ENCODE measurements at regions of chrX and their contacts with region 1.

Region 1: GRCh38 chrX:133444951-133445831 is 29.9 kb upstream of the GPC4 start:
- DNase-seq: peak; percentile 15 to 36
- H3K4me3 ChIP-seq: peak overlapping the region; percentile 21; the same call in 1 of the 2 replicates
- H3K4me3 Mint-ChIP-seq: peak overlapping the region; percentile 84
- H3K27ac Mint-ChIP-seq: peak overlapping the region; percentile 83
- H3K4me1 ChIP-seq: no peaks in the 10 kb centered on the region
- H3K4me1 Mint-ChIP-seq: no peaks in the 10 kb centered on the region
- H3K27me3 ChIP-seq: no peaks in the 10 kb centered on the region
- H3K27me3 Mint-ChIP-seq: no peaks in the 10 kb centered on the region
- CTCF ChIP-seq: no peak

Region 2: GRCh38 chrX:133265331-133265730 is 179.9 kb before region 1 on chrX:
- CTCF ChIA-PET with region 1: no interaction called
- POLR2A ChIA-PET with region 1: no interaction called
- intact Hi-C with region 1: no loop called
- DNase-seq: peak; percentile 34 to 62
- H3K4me3 ChIP-seq: no peak overlapping the region
- H3K4me3 Mint-ChIP-seq: no peak overlapping the region
- H3K27ac Mint-ChIP-seq: no peak overlapping the region
- H3K4me1 ChIP-seq: peaks cover 11% of the 10 kb centered on the region; the same call in 1 of the 2 replicates
- H3K4me1 Mint-ChIP-seq: no peaks in the 10 kb centered on the region
- H3K27me3 ChIP-seq: no peaks in the 10 kb centered on the region
- H3K27me3 Mint-ChIP-seq: no peaks in the 10 kb centered on the region
- CTCF ChIP-seq: no peak

Region 3: DNA sequence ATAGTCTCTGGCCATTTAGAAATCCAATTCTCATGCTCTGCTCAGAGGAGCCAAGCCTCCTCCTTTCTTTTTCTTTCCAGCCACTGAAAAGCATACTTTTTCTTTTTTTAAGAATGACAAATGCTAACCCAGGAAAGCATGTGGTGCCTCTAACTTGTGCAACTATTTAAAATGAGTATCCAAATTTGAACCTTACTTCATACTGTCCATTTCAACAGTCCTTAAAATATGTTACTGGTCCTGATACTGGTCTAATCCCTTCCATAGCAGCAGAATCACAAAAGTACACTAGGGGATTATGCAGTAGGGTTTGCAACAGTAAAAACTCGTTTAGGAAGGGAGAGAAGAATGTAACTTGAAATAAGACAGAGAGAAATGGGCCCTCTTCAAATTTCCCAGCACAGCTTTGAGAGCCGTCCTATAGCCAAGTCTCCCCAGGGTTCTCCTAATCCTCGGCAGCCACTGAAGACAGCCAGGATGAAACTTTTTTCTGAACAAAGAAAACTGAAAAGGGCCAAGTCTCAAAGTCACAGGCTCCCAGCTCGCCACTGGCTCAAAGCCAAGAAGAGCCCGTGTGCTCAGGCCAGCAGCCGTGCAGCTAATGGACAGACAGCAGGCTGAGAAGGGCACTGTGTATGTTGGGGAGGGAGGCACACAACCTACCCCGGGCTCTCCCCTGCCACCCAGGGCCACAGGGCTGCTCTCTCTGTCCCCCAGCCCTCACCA is 69.4 kb before region 1 on chrX:
- CTCF ChIA-PET with region 1: no interaction called
- POLR2A ChIA-PET with region 1: no interaction called
- intact Hi-C with region 1: no loop called
- DNase-seq: no peak
- H3K4me3 ChIP-seq: no peak overlapping the region
- H3K4me3 Mint-ChIP-seq: no peak overlapping the region
- H3K27ac Mint-ChIP-seq: no peak overlapping the region
- H3K4me1 ChIP-seq: no peaks in the 10 kb centered on the region
- H3K4me1 Mint-ChIP-seq: no peaks in the 10 kb centered on the region
- H3K27me3 ChIP-seq: no peaks in the 10 kb centered on the region
- H3K27me3 Mint-ChIP-seq: no peaks in the 10 kb centered on the region
- CTCF ChIP-seq: no peak

Region 4: DNA sequence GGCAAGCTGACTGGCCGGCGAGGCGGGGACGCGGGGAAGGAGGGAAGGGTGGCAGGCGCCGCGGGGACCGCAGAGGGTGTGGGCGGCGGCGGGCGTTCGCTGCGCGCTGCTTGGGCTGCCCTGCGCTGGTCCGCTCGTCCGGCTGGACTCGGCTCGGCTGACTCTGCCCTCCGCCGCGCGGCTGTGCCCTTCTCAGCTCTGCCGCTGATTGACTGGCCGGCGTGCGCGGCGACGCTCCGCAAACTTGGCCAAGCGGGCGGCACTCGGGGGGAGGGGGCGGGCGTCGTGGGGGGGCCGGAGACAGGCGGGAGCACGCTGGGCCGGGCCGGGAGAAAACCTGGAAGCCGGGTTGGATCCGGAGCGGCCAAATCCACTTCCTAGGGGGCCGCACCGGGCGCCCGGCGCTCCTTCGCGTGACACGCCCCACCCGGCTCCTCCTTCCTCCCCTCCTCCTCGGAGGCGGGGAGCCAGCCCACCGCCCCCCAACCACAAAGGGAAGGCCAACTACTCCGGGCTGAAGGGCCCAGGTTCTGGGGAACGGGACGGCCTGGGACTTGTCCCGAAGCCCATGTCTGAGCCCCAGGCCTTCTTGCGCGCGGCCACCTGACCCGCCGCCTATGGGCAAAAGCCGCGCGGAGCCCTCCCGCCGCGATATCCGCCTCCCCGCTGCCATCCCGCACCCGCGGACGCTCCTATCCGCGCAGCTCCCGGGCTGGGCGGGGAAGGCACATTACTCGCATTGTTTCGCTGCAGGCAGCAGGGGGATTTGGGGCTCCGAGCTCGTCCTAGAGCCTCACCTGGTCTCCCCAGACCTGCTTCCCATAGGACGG is 29.7 kb before region 1 on chrX and contains the start of gene GPC4:
- CTCF ChIA-PET with region 1: no interaction called
- POLR2A ChIA-PET with region 1: no interaction called
- intact Hi-C with region 1: loop called (anchors 2 kb)
- DNase-seq: peak; percentile 31 to 59
- H3K4me3 ChIP-seq: peak within 1 kb of the TSS; percentile 37
- H3K4me3 Mint-ChIP-seq: peak within 1 kb of the TSS; percentile 78
- H3K27ac Mint-ChIP-seq: no peak within 1 kb of the TSS
- H3K4me1 ChIP-seq: no peaks in the 10 kb centered on the region
- H3K4me1 Mint-ChIP-seq: no peaks in the 10 kb centered on the region
- H3K27me3 ChIP-seq: no peaks in the 10 kb centered on the region; the same call in 1 of the 2 replicates
- H3K27me3 Mint-ChIP-seq: peaks cover 18% of the 10 kb centered on the region
- CTCF ChIP-seq: no peak
- total RNA-seq, gene GPC4: 1.0 and 1.2 TPM in 2 replicates

Region 5: GRCh38 chrX:133544115-133544514 is 98.9 kb after region 1 on chrX:
- CTCF ChIA-PET with region 1: no interaction called
- POLR2A ChIA-PET with region 1: no interaction called
- intact Hi-C with region 1: no loop called
- DNase-seq: peak; percentile 10 to 31
- H3K4me3 ChIP-seq: no peak overlapping the region
- H3K4me3 Mint-ChIP-seq: no peak overlapping the region
- H3K27ac Mint-ChIP-seq: no peak overlapping the region
- H3K4me1 ChIP-seq: no peaks in the 10 kb centered on the region
- H3K4me1 Mint-ChIP-seq: no peaks in the 10 kb centered on the region
- H3K27me3 ChIP-seq: no peaks in the 10 kb centered on the region
- H3K27me3 Mint-ChIP-seq: no peaks in the 10 kb centered on the region
- CTCF ChIP-seq: no peak